Mammary epithelial cell (primary cell): ENCODE measurements at regions of chr3 and their contacts with region 1.

Region 1: GRCh38 chr3:107938143-107938542 is 152.7 kb downstream of the CD47 start:
- DNase-seq: peak; percentile 46
- H3K4me3 ChIP-seq: no peak overlapping the region
- H3K27ac ChIP-seq: no peak overlapping the region
- H3K4me1 ChIP-seq: peaks cover 5% of the 10 kb centered on the region
- H3K27me3 ChIP-seq: no peaks in the 10 kb centered on the region
- CTCF ChIP-seq: peak; percentile 41 to 72

Region 2: DNA sequence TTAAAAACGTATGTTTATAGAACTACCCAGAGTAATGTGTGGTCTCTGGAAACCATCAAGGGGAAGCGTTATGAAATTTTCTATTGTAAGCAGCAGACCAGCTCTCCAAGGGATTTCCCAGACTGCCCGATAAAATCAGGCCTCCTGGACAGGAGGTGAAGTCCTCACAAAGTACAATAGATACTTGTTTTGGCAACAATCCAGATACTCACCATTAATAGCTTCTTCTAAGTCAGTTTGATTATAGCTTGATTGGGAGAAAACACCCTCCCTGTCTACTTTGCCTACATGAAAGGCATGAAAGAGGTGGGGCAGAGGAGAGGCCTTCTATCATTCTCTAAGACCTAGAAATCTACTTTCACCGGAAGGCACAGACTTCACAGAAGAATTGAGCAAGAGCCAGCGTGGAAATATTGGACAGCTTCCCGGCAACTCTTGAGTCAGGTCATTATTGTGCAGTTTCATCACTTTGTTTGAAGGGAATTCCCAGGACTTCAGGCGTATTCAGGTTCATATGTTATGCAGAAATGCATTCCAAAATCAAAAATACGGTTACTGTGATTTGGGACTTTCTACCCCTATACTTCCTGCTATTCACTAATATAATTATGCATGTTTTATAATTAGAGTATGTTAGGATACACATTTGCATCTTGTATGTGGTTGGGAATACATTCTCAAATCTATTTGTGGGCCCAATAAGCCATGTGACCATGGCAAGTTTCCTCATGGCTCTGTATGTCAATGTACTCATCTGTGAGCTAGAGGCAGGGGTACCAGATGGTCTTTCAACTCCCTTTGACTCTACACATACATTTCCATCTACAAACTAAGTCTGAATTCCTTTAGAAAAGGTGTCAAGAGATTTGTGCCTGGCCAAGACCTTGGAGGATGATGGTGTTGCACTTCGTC is 49.1 kb after region 1 on chr3:
- CTCF ChIA-PET with region 1: no interaction called
- dilution Hi-C with region 1: no loop called
- in situ Hi-C with region 1: no loop called
- intact Hi-C with region 1: loop called (anchors 5 kb)
- DNase-seq: peak; percentile 98
- H3K4me3 ChIP-seq: no peak overlapping the region
- H3K27ac ChIP-seq: peak overlapping the region; percentile 65
- H3K4me1 ChIP-seq: peaks cover 33% of the 10 kb centered on the region
- H3K27me3 ChIP-seq: no peaks in the 10 kb centered on the region
- CTCF ChIP-seq: no peak